ENCODE measurements at regions of chr4 and their contacts with region 1.

Region 1: DNA sequence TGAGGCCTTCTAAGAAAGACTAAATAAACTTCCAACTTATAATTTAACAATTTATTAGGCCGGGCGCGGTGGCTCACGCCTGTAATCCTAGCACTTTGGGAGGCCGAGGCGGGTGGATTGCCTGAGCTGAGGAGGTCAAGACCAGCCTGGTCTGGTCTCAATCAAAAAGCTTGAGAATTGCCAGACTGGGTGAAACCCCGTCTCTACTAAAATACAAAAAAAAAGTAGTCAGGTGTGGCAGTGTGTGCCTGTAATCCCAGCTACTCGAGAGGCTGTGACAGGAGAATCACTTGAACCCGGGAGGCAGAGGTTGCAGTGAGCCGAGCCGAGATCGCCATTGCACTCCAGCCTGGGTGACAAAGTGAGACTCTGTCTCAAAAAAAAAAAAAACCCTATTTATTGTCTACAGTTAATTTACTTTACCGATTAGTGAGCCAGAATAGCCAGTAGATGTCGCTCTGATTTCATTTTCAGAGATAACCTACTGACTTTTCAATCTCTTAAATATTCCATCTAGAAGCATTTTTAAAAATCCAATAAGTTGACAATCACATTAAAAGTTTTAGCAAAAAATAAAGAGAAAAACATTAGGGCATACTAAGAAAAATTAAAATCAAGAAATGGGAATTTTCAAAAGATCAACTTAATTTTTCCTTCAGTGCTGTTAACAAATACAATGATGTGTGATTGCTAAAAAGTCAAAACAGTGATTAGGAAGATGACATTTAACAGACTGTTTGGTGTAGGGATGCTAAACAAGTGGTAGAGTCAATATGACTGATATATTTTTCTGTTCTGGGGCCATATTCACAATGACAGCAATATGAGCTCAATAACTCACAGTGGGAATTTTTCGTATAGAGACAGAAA is 4.3 kb upstream of the SHROOM3 start:
- DNase-seq: peak; percentile 7
- H3K4me3 ChIP-seq: no peak overlapping the region
- H3K27ac ChIP-seq: no peak overlapping the region
- H3K27me3 ChIP-seq: peaks cover 15% of the 10 kb centered on the region
- CTCF ChIP-seq: peak; percentile 73

Region 2: GRCh38 chr4:76441881-76442280 is 11.1 kb after region 1 on chr4:
- CTCF ChIA-PET with region 1: interaction called, 13 read pairs
- POLR2A ChIA-PET with region 1: no interaction called
- DNase-seq: no peak
- H3K4me3 ChIP-seq: no peak overlapping the region
- H3K27ac ChIP-seq: no peak overlapping the region
- H3K27me3 ChIP-seq: peaks cover 14% of the 10 kb centered on the region
- CTCF ChIP-seq: no peak

Region 3: GRCh38 chr4:76504613-76505465 is 74.1 kb after region 1 on chr4:
- CTCF ChIA-PET with region 1: interaction called, 262 read pairs
- POLR2A ChIA-PET with region 1: no interaction called
- DNase-seq: peak; percentile 11
- H3K4me3 ChIP-seq: no peak overlapping the region
- H3K27ac ChIP-seq: no peak overlapping the region
- H3K27me3 ChIP-seq: peaks cover 14% of the 10 kb centered on the region
- CTCF ChIP-seq: peak; percentile 73

Region 4: DNA sequence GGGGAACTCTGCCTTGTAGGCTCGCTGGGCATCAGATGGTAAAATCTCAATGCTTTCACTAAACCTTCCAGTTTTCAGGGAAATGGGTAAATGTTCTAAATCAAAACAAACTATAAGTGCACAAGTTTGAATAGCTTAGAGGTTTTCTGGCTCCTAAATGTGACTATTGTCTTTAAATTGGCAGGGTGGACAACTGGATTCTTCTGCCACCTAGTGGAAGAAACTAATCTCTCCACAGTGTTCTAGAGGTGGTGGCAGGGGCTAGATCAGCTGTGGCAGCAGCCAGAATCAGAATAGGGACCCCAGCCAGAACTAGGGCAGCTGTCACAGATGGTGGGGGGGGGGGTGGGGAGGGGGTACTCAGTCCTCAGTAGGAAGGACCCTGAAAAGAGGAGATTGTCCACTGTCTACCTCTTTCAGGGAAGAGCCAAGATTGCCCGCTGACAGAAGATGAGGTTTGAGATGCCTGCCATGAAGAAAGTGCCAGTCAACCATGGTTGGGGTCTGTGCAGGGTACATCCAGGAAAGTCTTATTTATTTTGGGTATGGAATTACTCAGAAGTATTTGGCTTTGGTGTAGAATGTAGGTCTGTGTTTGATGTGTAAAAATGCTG is 927.7 kb after region 1 on chr4:
- CTCF ChIA-PET with region 1: interaction called, 17 read pairs
- POLR2A ChIA-PET with region 1: no interaction called
- DNase-seq: no peak
- H3K4me3 ChIP-seq: no peak overlapping the region
- H3K27ac ChIP-seq: no peak overlapping the region
- H3K27me3 ChIP-seq: peaks cover 8% of the 10 kb centered on the region
- CTCF ChIP-seq: peak; percentile 72